AG04449 (cell line): ENCODE measurements at regions of chr6 and their contacts with region 1.

Region 1: GRCh38 chr6:37169496-37170272 is at the start of gene PIM1:
- DNase-seq: peak; percentile 76
- H3K4me3 ChIP-seq: peak within 1 kb of the TSS; percentile 96
- CTCF ChIP-seq: no peak

Region 2: GRCh38 chr6:36907781-36908180 is 261.9 kb before region 1 on chr6:
- CTCF ChIA-PET with region 1: no interaction called
- POLR2A ChIA-PET with region 1: no interaction called
- DNase-seq: no peak
- H3K4me3 ChIP-seq: no peak overlapping the region
- CTCF ChIP-seq: no peak

Region 3: DNA sequence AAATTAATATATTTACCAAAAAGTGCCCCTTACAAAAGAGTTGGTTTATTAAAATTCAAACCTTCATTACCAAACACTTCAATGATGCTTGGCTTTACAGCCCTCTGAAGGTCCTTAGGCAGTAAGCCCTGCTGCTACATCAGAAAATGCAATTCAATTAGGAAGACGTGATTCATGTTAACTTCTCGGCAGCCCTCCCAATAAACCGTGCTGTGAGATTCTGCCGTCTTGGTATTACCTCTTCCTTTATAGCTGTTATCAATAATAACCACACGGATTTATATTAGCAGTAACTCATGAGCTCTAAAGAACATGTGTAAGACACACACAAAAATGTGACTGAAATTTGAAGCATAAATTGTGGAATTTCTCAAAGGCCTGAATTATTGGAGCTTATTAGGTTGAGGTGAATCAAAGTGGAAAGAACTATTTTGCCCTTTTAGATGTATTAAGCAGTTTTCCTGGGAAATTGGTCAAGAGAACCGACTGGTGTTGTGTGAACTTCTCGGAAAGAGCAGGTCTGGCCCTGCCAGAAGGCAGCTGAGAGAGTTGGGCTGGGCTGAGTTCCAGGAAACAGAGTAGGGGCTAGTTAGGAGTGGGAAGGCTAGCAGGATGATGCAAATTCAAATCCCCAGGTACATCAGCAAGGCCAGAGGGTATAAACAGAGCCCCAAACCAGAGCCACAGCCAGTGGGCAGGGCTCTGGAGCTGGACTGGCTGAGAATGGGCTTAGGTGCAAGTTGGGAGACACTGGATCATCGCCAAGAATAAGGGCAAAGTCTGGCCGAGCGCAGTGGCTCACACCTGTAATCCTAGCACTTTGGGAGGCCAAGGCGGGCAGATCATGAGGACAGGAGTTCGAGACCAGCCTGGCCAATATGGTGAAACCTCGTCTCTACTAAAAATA is 131.1 kb before region 1 on chr6:
- CTCF ChIA-PET with region 1: interaction called, 29 read pairs
- POLR2A ChIA-PET with region 1: no interaction called
- DNase-seq: no peak
- H3K4me3 ChIP-seq: no peak overlapping the region
- CTCF ChIP-seq: no peak

Region 4: DNA sequence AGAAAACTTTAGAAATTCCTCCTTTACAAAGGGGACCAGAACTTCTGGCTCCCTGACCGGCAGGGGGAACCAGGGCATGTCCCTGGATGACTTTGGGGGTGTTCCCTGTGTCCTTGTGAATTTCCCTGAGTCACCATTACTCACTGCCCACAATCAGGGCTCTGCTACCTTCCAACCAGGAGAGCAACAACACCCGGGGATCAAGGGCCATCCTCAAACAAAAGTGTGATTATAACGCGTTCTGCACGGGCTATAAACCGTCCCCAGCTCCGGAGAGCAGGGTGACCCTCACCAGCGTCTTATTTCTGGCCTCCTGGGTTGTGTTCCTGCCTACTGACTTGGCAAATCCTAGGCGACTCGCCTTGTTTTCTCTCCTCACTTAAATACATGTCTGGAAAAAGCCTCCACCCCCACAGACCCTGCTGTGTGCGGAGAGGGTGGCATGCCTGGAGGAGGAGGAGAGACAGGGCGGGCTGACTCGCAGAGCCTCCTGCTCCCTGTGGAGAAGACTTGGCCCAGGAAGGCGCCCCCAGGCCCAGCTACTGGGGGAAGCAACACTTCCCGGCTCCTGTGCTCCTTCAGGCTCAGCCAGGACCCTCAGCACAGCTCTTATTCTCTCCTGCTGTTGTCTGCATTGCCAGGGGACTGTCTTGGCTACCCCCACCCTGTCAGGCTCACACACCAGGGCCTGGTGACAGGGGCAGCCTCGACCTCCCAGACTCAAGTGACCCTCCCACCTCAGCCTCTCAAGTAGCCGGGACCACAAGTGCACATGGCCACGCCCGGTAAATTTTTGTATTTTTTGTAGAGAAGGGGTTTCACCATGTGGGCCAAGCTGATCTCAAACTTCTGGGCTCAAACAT is 110.1 kb before region 1 on chr6:
- CTCF ChIA-PET with region 1: interaction called, 522 read pairs
- POLR2A ChIA-PET with region 1: interaction called, 11 read pairs
- DNase-seq: peak; percentile 80
- H3K4me3 ChIP-seq: peak overlapping the region; percentile 36
- CTCF ChIP-seq: peak; percentile 77

Region 5: GRCh38 chr6:37127961-37128862 is 41.5 kb before region 1 on chr6:
- CTCF ChIA-PET with region 1: interaction called, 16 read pairs
- POLR2A ChIA-PET with region 1: interaction called, 6 read pairs
- DNase-seq: peak; percentile 49
- H3K4me3 ChIP-seq: no peak overlapping the region
- CTCF ChIP-seq: no peak

Region 6: DNA sequence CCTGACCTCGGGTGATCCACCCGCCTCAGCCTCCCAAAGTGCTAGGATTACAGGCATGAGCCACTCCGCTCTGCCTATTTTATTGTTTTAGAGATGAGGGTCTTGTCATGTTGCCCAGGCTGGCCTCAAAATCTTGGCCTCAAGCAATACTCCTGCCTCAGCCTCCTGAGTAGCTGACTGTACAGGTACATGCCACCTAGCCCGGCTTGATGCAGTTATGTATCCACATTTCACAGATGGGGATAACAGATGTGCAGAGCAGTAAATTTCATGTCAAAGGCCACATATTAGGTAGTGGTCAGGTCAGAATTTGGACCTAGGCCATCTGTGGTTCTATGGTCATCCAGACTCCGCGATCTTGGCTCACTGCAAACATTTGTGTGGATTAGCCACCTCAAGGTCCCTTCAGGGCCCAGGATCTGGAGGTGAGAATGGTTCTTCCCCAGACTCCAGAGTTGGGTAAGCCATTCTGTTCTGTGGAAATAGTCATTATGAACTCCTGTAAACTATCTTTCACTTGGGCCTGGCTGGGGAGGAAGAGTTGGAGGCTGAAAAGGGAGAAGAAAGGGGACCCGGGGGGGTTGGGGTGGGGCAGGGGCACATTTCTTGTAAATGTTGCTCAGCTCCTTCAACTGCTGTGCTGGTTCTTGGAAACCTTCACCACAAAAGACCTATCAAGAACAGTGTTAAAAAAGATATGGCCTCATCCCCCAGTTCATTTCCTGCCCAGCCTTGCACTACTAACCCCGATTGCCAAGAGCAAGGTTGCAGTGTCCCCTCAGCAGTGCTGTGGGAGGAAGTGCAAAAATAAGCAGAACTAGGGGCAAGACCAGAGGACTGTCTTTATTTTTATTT is 13.3 kb after region 1 on chr6:
- CTCF ChIA-PET with region 1: interaction called, 26 read pairs
- POLR2A ChIA-PET with region 1: no interaction called
- DNase-seq: no peak
- H3K4me3 ChIP-seq: no peak overlapping the region
- CTCF ChIP-seq: no peak

Region 7: DNA sequence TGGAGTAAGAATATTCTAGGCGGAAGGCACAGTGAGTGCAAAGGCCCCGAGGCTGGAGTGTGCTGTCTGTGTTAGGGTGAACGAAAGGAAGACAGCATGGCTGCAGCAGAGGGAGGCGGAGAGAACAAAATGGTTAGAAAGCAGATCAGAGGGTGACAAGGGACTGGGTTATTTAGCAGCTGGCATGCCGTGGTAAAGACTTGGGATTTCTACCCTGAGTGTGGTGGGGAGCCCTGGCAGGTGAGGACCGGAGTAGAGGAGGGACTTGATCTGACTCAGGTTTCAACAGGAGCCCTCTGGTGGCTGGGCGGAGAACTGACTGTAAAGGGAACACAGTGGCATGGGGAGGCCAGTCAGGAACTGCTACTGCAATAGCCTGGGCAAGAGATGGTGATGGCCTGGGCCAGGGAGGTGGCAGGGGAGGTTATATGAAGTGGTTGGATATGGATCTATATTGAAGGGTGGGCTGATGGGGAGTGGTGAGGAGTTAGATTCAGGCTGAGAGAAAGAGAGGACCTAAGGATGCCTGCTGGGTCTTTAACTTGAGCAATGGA is 38.3 kb after region 1 on chr6:
- CTCF ChIA-PET with region 1: interaction called, 180 read pairs
- POLR2A ChIA-PET with region 1: no interaction called
- DNase-seq: no peak
- H3K4me3 ChIP-seq: no peak overlapping the region
- CTCF ChIP-seq: peak; percentile 84